ENCODE measurements at regions of chr20 and their contacts with region 1.

Region 1: DNA sequence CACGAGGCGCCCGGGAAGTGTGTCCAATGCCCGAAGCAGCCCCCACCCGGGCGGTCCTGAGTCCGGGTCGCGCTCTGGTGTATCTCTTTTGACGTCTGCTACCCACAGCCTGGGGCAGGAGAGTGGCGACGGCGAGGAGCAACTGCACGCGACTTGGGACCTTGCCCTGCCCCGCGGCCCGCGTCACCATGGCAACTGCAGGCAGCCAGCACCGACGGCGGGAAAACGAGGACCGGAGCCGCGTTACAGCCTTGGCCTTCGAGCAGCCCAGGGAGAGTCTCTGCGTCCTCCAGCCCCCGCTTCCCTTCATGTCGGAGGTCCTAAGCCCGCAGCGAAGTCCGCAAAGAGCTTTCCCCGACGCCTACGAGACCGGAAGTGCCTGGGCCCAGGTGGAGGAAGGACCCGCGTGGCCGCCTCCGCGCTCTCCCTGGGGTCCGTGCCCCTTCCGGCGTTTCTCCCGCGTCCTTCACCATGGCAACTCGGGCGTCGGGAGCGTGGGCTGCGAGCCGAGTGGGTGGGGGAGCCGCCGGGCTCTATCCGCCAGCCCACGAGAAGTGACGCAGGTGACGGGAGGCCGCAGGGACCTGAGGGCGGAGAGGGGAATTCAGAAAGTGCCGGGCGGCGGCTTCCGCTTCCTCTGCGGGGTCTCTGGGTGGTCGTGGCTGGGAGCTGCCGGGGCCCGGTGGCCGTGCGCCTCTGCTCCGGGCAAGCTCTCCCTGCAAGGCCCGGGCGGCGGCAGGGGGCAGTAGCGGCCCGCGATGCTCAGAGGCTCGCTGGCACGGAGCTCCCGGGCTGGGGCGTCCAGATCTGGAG is 88.6 kb upstream of the TGM3 start:
- DNase-seq: peak; percentile 63
- ATAC-seq: peak; percentile 88
- H3K4me3 ChIP-seq: peak overlapping the region; percentile 49
- H3K27ac ChIP-seq: no peak overlapping the region
- H3K4me1 ChIP-seq: no peaks in the 10 kb centered on the region
- H3K27me3 ChIP-seq: peaks cover 56% of the 10 kb centered on the region
- CTCF ChIP-seq: peak; percentile 86

Region 2: GRCh38 chr20:2051946-2052345 is 155.2 kb before region 1 on chr20:
- CTCF ChIA-PET with region 1: no interaction called
- POLR2A ChIA-PET with region 1: no interaction called
- intact Hi-C with region 1: no loop called
- DNase-seq: no peak
- ATAC-seq: no peak
- H3K4me3 ChIP-seq: no peak overlapping the region
- H3K27ac ChIP-seq: no peak overlapping the region
- H3K4me1 ChIP-seq: no peaks in the 10 kb centered on the region
- H3K27me3 ChIP-seq: peaks cover 76% of the 10 kb centered on the region
- CTCF ChIP-seq: no peak

Region 3: GRCh38 chr20:2217857-2218539 is 10.8 kb after region 1 on chr20:
- CTCF ChIA-PET with region 1: no interaction called
- POLR2A ChIA-PET with region 1: no interaction called
- intact Hi-C with region 1: no loop called
- DNase-seq: no peak
- ATAC-seq: no peak
- H3K4me3 ChIP-seq: no peak overlapping the region
- H3K27ac ChIP-seq: no peak overlapping the region
- H3K4me1 ChIP-seq: no peaks in the 10 kb centered on the region
- H3K27me3 ChIP-seq: peaks cover 66% of the 10 kb centered on the region
- CTCF ChIP-seq: no peak

Region 4: GRCh38 chr20:2237059-2237458 is 29.9 kb after region 1 on chr20:
- CTCF ChIA-PET with region 1: no interaction called
- POLR2A ChIA-PET with region 1: no interaction called
- intact Hi-C with region 1: no loop called
- DNase-seq: peak; percentile 69
- ATAC-seq: peak; percentile 43
- H3K4me3 ChIP-seq: no peak overlapping the region
- H3K27ac ChIP-seq: no peak overlapping the region
- H3K4me1 ChIP-seq: no peaks in the 10 kb centered on the region
- H3K27me3 ChIP-seq: peaks cover 25% of the 10 kb centered on the region
- CTCF ChIP-seq: peak; percentile 35

Region 5: DNA sequence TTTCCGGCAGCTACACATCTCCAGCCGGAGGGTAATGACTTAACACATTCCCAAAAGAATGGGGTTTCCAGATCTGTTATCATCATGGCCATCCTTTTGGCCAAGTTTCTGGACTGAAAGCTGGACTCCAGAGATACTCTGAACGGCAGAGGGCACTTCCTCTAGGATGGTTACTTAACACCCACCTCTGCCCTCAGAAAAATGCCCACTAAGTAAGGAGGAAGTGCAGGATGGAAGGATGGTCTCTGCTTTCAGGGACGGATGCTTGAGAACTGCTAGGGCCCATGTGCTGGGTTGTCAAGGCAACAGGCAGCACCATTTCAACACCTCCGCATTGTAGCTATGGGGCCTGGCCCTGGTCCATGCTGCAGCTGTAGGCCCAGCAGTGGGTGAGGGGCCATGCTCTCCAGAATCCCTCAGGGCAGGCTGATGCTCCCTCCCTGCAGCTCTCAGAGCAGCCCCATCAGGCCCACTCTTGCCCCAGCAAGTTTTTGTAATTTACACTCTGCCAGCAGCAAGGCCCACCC is 72.2 kb after region 1 on chr20:
- CTCF ChIA-PET with region 1: no interaction called
- POLR2A ChIA-PET with region 1: no interaction called
- intact Hi-C with region 1: no loop called
- DNase-seq: no peak
- ATAC-seq: no peak
- H3K4me3 ChIP-seq: no peak overlapping the region
- H3K27ac ChIP-seq: no peak overlapping the region
- H3K4me1 ChIP-seq: peaks cover 4% of the 10 kb centered on the region
- H3K27me3 ChIP-seq: peaks cover 49% of the 10 kb centered on the region
- CTCF ChIP-seq: no peak

Region 6: GRCh38 chr20:2349818-2350508 is 142.8 kb after region 1 on chr20:
- CTCF ChIA-PET with region 1: interaction called, 4 read pairs
- POLR2A ChIA-PET with region 1: no interaction called
- intact Hi-C with region 1: loop called (anchors 1 kb)
- DNase-seq: peak; percentile 49
- ATAC-seq: no peak
- H3K4me3 ChIP-seq: no peak overlapping the region
- H3K27ac ChIP-seq: no peak overlapping the region
- H3K4me1 ChIP-seq: no peaks in the 10 kb centered on the region
- H3K27me3 ChIP-seq: peaks cover 20% of the 10 kb centered on the region; the same call in 1 of the 2 replicates
- CTCF ChIP-seq: no peak

Region 7: GRCh38 chr20:2402271-2402980 is 195.3 kb after region 1 on chr20:
- CTCF ChIA-PET with region 1: no interaction called
- POLR2A ChIA-PET with region 1: no interaction called
- intact Hi-C with region 1: loop called (anchors 5 kb)
- DNase-seq: peak; percentile 66
- ATAC-seq: peak; percentile 78
- H3K4me3 ChIP-seq: no peak overlapping the region
- H3K27ac ChIP-seq: no peak overlapping the region
- H3K4me1 ChIP-seq: no peaks in the 10 kb centered on the region
- H3K27me3 ChIP-seq: 0 out of 2 replicates have a peak, but pooled peaks cover 5% of the 10 kb centered on the region
- CTCF ChIP-seq: peak; percentile 74

Measured in PC-3 (cell line).